H1 (cell line): ENCODE measurements at regions of chr1 and their contacts with region 1.

Region 1: DNA sequence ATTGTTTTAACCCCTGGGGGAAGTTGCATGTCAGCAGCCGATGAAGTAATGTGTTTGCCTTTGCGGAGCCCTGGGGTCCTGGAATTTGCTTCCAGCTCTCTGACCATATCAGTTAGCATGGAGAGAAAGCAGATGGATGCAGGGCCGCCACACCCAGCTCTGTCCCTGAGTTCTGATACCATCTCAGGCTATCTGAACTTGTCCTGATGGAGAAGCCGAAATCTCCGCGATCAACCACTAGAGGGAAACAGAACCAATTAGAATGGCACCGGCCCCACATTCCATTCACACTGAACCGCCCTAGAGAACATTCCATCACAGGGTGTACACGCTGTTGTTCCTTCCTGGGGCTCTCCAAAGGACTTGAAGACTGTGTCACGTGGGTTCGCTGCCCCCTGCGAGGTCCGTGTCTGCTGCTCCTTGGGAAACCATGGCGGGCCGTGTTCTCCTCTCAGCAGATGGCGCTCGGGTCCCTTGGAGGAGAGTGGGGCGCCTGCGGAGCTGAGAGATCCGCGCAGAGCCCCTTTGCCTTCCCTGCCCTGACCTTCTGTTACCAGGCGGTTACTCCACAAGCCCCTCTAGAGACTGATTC is 75.4 kb downstream of the ABCA4 start:
- DNase-seq: peak; percentile 81 to 84
- H3K4me3 ChIP-seq: peak overlapping the region in 1 of 4 experiments; percentile 34; a peak in 2 of 8 replicates
- H3K27ac ChIP-seq: no peak overlapping the region
- H3K4me1 ChIP-seq: peaks cover 0 to 7% (median 5%) of the 10 kb centered on the region in 4 experiments; a peak in 6 of 7 replicates
- H3K27me3 ChIP-seq: no peaks in the 10 kb centered on the region
- CTCF ChIP-seq: peak; percentile 51 to 78 (median 62)
- EP300 ChIP-seq: no peak
- POLR2A ChIP-seq: no peak
- RAD21 ChIP-seq: peak; percentile 73 to 77

Region 2: GRCh38 chr1:94025383-94026340 is 19.9 kb before region 1 on chr1:
- CTCF ChIA-PET with region 1: interaction called, 465 read pairs
- POLR2A ChIA-PET with region 1: no interaction called
- DNase-seq: no peak
- H3K4me3 ChIP-seq: no peak overlapping the region
- H3K27ac ChIP-seq: no peak overlapping the region
- H3K4me1 ChIP-seq: peaks cover 0 to 6% (median 2%) of the 10 kb centered on the region in 4 experiments; a peak in 3 of 7 replicates
- H3K27me3 ChIP-seq: no peaks in the 10 kb centered on the region; a peak in 1 of 7 replicates
- CTCF ChIP-seq: peak in 2 of 3 experiments; percentile 51 to 59; a peak in 3 of 4 replicates
- EP300 ChIP-seq: no peak
- POLR2A ChIP-seq: no peak
- RAD21 ChIP-seq: peak; percentile 63 to 66

Region 3: GRCh38 chr1:94068999-94069918 is 23.7 kb after region 1 on chr1:
- CTCF ChIA-PET with region 1: interaction called, 409 read pairs
- POLR2A ChIA-PET with region 1: no interaction called
- DNase-seq: no peak
- H3K4me3 ChIP-seq: no peak overlapping the region
- H3K27ac ChIP-seq: no peak overlapping the region
- H3K4me1 ChIP-seq: 0 out of 7 replicates have a peak, but pooled peaks cover 0 to 4% (median 0%) of the 10 kb centered on the region in 4 experiments
- H3K27me3 ChIP-seq: peaks cover 38 to 63% (median 55%) of the 10 kb centered on the region in 4 experiments
- CTCF ChIP-seq: no peak
- EP300 ChIP-seq: no peak
- POLR2A ChIP-seq: no peak
- RAD21 ChIP-seq: no peak

Region 4: GRCh38 chr1:94237291-94238226 is 192.0 kb after region 1 on chr1 and contains the start of gene ARHGAP29:
- CTCF ChIA-PET with region 1: interaction called, 23 read pairs
- POLR2A ChIA-PET with region 1: no interaction called
- DNase-seq: peak in 1 of 2 experiments; percentile 89
- H3K4me3 ChIP-seq: peak within 1 kb of the TSS; percentile 53 to 84 (median 70)
- H3K27ac ChIP-seq: no peak within 1 kb of the TSS
- H3K4me1 ChIP-seq: peaks cover 0 to 2% (median 0%) of the 10 kb centered on the region in 4 experiments; a peak in 1 of 7 replicates
- H3K27me3 ChIP-seq: peaks cover 17 to 40% (median 32%) of the 10 kb centered on the region in 4 experiments
- CTCF ChIP-seq: peak in 1 of 3 experiments; percentile 11; a peak in 2 of 4 replicates
- EP300 ChIP-seq: no peak
- POLR2A ChIP-seq: peak in 1 of 2 experiments; percentile 76; a peak in 2 of 3 replicates
- RAD21 ChIP-seq: peak; percentile 20 to 22; a peak in 2 of 4 replicates
- total RNA-seq, gene ARHGAP29: 2.9 and 3.2 TPM in 2 replicates

Region 5: GRCh38 chr1:94247138-94248094 is 201.9 kb after region 1 on chr1:
- CTCF ChIA-PET with region 1: interaction called, 10 read pairs
- POLR2A ChIA-PET with region 1: no interaction called
- DNase-seq: peak in 1 of 2 experiments; percentile 91
- H3K4me3 ChIP-seq: peak overlapping the region; percentile 68 to 79 (median 70)
- H3K27ac ChIP-seq: no peak overlapping the region
- H3K4me1 ChIP-seq: peaks cover 0 to 5% (median 3%) of the 10 kb centered on the region in 4 experiments; a peak in 4 of 7 replicates
- H3K27me3 ChIP-seq: peaks cover 20 to 60% (median 47%) of the 10 kb centered on the region in 4 experiments
- CTCF ChIP-seq: 0 out of 4 replicates have a peak, but pooled peaks of 1 of the 3 experiments have one; percentile 1
- EP300 ChIP-seq: no peak
- POLR2A ChIP-seq: 0 out of 3 replicates have a peak, but pooled peaks of 1 of the 2 experiments have one; percentile 22
- RAD21 ChIP-seq: peak in 1 of 2 experiments; percentile 14; a peak in 1 of 4 replicates